Esophagus squamous epithelium (tissue), 5 donors: ENCODE measurements at regions of chr2 and their contacts with region 1.

Region 1: DNA sequence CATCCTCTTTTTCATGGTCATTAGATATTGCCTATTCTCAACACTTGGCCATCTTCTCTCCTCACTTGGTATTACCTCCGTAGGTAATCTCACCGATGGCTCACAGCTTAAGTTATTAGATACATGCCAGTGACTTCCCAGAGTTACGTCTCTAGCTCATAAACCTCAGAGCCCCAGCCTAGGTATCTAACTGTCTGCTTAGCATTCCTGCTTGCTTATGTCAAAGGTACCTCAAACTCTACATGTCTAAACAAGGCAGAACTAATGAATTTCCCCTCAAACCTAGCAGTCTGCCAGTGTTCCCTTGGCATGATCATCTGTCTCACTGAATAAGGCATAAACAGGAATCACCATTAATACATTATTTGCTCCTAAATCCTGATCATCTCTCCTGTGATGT is 27.7 kb upstream of the ZNF638 start:
- DNase-seq: no peak
- H3K4me3 ChIP-seq: no peak overlapping the region
- H3K27ac ChIP-seq: no peak overlapping the region
- H3K4me1 ChIP-seq: no peaks in the 10 kb centered on the region
- H3K27me3 ChIP-seq: no peaks in the 10 kb centered on the region
- CTCF ChIP-seq: no peak
- POLR2A ChIP-seq: no peak

Region 2: GRCh38 chr2:71173096-71173495 is 130.8 kb before region 1 on chr2:
- intact Hi-C with region 1: no loop called
- DNase-seq: no peak
- H3K4me3 ChIP-seq: no peak overlapping the region
- H3K27ac ChIP-seq: no peak overlapping the region
- H3K4me1 ChIP-seq: no peaks in the 10 kb centered on the region
- H3K27me3 ChIP-seq: peaks cover 0 to 6% (median 0%) of the 10 kb centered on the region in 4 donors
- CTCF ChIP-seq: no peak
- POLR2A ChIP-seq: no peak

Region 3: GRCh38 chr2:71510196-71510807 is 206.5 kb after region 1 on chr2:
- intact Hi-C with region 1: loop called (anchors 5 kb)
- DNase-seq: no peak
- H3K4me3 ChIP-seq: no peak overlapping the region
- H3K27ac ChIP-seq: no peak overlapping the region
- H3K4me1 ChIP-seq: peaks cover 0 to 6% (median 0%) of the 10 kb centered on the region in 3 donors
- H3K27me3 ChIP-seq: peaks cover 0 to 4% (median 0%) of the 10 kb centered on the region in 4 donors
- CTCF ChIP-seq: peak; percentile 80 to 94 (median 89)
- POLR2A ChIP-seq: no peak

Region 4: GRCh38 chr2:71592181-71592711 is 288.4 kb after region 1 on chr2:
- intact Hi-C with region 1: no loop called
- DNase-seq: no peak
- H3K4me3 ChIP-seq: no peak overlapping the region
- H3K27ac ChIP-seq: peak overlapping the region in 1 of 4 donors; percentile 44
- H3K4me1 ChIP-seq: peaks cover 0 to 7% (median 0%) of the 10 kb centered on the region in 3 donors
- H3K27me3 ChIP-seq: peaks cover 0 to 10% (median 0%) of the 10 kb centered on the region in 4 donors
- CTCF ChIP-seq: no peak
- POLR2A ChIP-seq: no peak